ENCODE measurements at regions of chr2 and their contacts with region 1.

Region 1: DNA sequence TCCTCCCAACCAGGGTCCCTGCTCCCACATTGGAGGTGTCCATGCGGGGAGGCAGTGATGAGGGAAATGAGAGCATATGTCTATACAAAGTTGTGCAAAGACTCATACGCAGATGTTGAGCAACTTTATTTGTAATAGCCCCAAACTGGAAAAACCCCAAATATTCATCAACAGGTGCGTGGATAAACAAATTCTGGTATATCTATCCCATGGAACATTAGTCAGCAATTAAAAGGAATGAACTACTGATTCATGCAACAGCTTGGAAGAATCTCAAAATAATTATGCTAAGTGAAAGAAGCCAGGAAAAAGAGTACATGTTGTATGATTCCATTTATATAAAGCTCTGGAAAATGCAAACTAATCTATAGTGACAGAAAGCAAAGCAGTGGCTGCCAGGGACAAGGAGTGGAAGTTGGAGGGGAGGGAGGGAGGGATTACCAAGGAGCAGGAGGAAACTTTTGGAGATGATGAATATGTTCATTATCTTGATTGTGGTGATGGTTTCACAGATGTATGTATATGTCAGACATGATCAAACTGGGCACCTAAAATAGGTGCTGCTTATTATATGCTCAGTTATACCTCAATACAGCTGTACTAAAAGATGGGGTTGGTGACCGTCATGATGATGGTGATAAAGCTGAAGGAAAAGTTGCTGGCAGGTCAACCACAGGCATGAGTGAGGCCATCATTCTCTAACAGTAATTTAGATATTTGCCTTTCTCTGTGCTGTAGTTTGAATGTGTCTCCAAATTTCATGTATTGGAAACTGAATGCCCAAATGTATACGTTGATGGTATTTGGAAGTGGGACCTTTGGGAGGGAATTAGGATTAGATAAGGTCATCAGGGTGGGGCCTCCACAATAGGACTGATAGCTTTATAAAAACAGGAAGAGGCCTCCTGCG is 270.9 kb downstream of the CYP26B1 start:
- DNase-seq: peak; percentile 39
- H3K4me3 Mint-ChIP-seq: no peak overlapping the region
- H3K27ac Mint-ChIP-seq: no peak overlapping the region
- H3K4me1 Mint-ChIP-seq: peaks cover 13% of the 10 kb centered on the region
- H3K27me3 Mint-ChIP-seq: peaks cover 21% of the 10 kb centered on the region
- CTCF ChIP-seq: no peak

Region 2: DNA sequence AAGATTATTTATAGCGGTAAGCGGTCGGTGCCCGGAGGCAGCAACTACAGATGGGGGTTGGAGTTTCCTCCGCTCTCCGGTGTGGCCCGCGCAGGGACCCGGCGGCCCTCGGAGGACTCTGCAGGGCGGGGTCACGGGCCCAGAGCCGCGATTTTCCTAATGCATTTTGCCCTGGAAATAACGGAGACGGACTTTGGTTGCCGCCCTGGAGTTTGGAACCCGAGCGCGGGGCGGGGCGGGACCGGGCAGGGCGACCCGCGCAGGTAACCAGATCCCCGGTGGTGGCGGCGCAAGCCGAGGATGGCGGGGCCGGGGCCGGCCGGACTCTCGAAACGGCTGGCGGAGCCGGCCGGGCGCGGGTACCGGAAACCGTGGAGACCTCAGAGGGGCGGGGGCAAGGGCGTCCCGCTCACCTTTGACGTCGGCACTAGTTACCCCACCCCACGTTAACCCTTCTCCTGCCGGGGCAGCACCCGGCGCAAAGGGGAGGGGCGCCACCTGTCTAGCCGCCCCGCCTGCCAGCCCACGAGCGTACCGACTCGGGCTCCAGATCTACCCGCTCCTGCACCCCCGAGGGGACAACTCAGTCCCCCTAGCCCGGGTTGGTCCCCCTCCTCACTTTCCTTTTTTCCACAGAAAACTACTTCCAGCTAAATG is 268.0 kb after region 1 on chr2:
- CTCF ChIA-PET with region 1: no interaction called
- POLR2A ChIA-PET with region 1: interaction called, 4 read pairs
- intact Hi-C with region 1: loop called (anchors 2 kb)
- DNase-seq: peak; percentile 81
- H3K4me3 Mint-ChIP-seq: peak overlapping the region; percentile 95
- H3K27ac Mint-ChIP-seq: no peak overlapping the region
- H3K4me1 Mint-ChIP-seq: peaks cover 20% of the 10 kb centered on the region
- H3K27me3 Mint-ChIP-seq: peaks cover 9% of the 10 kb centered on the region
- CTCF ChIP-seq: no peak

Measured in MCF 10A (cell line).